ENCODE measurements at regions of chr6 and their contacts with region 1.

Region 1: DNA sequence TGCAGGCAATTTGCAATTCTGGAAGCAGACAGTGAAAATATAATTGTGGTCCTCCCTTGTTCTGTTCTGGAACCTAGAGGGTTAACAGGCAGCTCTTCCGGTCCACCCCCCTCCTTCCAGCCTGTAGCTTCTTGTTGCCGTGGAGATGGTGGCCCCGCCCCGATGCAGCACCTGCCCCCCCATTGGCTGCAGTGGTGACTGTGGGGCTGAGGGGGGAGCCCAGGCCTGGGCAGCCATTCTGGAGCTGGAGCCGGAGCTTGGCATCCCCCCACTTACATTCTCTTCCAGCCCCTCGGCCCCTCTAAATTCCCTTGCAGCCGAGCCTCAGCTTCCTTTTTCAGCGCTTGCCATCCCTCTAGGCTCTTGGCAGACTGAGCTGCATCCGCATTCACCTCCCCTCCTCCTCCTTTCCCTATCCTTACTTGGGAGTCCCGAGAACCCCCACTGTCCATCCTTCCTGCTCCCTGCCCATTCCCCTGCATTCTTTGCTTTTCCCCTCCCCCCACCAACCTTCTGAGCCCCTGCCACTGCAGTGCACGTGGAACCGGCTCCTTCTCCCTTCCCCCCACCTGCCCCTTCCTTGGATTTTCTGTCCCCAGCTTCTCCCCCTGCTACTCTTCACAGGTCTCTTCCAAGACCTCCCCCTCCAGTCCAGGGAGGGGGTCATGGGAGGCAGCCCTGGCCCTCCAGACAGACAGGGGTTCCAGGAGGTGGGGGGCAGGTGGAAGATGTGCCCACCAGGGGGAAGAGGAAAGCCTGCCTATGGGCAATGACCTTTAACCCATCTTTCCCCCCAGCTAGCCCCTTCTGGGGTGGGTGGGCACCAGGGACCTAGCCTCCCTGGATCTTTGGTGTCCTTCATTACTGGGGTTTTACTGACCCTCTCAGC is 11.4 kb downstream of the SYNGAP1 start:
- DNase-seq: peak; percentile 63 to 90 (median 86)
- ATAC-seq: peak; percentile 62 to 73 (median 64)
- H3K4me3 ChIP-seq: peak overlapping the region; percentile 50 to 67
- H3K4me3 Mint-ChIP-seq: peak overlapping the region; percentile 85 to 97 (median 87)
- H3K27ac ChIP-seq: peak overlapping the region; percentile 88
- H3K27ac Mint-ChIP-seq: peak overlapping the region; percentile 90 to 95
- H3K4me1 ChIP-seq: peaks cover 42 to 67% of the 10 kb centered on the region in 2 experiments
- H3K4me1 Mint-ChIP-seq: peaks cover 62 to 71% (median 70%) of the 10 kb centered on the region in 3 donors
- H3K27me3 ChIP-seq: no peaks in the 10 kb centered on the region
- H3K27me3 Mint-ChIP-seq: no peaks in the 10 kb centered on the region

Region 2: GRCh38 chr6:33417903-33418689 is 13.1 kb before region 1 on chr6 and contains the start of gene CUTA:
- CTCF ChIA-PET with region 1: interaction called in 1 of 2 experiments, 12 read pairs
- POLR2A ChIA-PET with region 1: interaction called in 1 of 2 experiments, 5 read pairs
- DNase-seq: peak; percentile 95 to 100 (median 99)
- ATAC-seq: peak; percentile 86 to 92 (median 92)
- H3K4me3 ChIP-seq: peak within 1 kb of the TSS; percentile 86 to 91
- H3K4me3 Mint-ChIP-seq: peak within 1 kb of the TSS; percentile 92 to 94 (median 94)
- H3K27ac ChIP-seq: peak within 1 kb of the TSS; percentile 98
- H3K27ac Mint-ChIP-seq: peak within 1 kb of the TSS; percentile 96 to 99
- H3K4me1 ChIP-seq: peaks cover 23 to 72% of the 10 kb centered on the region in 2 experiments
- H3K4me1 Mint-ChIP-seq: peaks cover 65 to 84% (median 79%) of the 10 kb centered on the region in 3 donors
- H3K27me3 ChIP-seq: no peaks in the 10 kb centered on the region
- H3K27me3 Mint-ChIP-seq: no peaks in the 10 kb centered on the region
- total RNA-seq, gene CUTA: 169 to 184 (median 176) TPM

Region 3: DNA sequence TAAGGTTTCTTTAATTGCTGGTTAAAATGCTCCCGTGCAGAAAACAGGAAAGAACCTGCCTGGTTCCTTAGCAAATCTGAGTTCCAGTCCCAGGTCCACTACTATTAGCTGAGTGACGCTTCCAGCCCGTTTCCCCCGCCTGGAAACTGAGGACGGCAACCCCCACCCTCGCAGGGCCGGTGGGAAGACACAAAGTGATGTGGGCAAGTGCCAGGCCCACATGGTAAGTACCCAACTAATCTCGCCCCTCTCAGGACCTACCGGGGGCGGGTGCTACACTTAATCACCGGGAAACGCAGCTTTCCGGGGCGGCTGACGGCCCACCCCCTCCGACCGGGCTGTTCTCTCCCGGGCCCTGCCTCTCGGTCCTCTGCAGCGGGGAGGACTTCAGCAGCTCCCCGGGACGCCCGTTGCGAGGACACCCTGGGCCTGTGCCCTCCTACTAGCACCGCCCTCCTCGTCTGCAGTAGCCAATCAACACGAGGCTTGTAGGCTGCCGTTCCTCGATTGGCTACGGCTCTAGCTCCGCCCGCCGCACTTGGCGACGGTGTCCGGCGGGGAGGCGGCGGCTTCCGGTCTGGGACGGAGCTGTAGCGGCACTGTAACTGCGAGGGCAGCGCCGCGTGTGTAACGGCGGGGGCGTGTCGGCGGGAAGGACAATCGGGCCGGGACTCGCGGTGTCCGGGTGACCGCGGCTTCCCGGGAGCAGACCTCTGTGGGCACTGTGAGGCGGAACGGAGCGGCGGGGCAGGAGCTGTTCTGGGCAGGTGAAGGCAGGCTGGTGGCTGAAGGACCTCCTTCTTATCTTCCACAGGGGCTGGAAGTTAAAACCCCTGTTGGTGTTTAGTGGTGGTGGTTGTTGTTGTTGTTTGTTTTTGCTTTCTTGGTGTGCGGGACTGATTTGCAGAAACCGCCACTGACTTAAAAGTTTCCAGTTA is 23.0 kb after region 1 on chr6 and contains the start of gene ZBTB9:
- CTCF ChIA-PET with region 1: interaction called in 1 of 2 experiments, 18 read pairs
- POLR2A ChIA-PET with region 1: interaction called in 1 of 2 experiments, 6 read pairs
- DNase-seq: peak; percentile 82 to 95 (median 90)
- ATAC-seq: peak; percentile 99 to 100 (median 99)
- H3K4me3 ChIP-seq: peak within 1 kb of the TSS; percentile 92
- H3K4me3 Mint-ChIP-seq: peak within 1 kb of the TSS; percentile 88 to 96 (median 91)
- H3K27ac ChIP-seq: peak within 1 kb of the TSS; percentile 69
- H3K27ac Mint-ChIP-seq: peak within 1 kb of the TSS; percentile 84 to 97
- H3K4me1 ChIP-seq: peaks cover 10 to 37% of the 10 kb centered on the region in 2 experiments
- H3K4me1 Mint-ChIP-seq: peaks cover 35 to 42% (median 39%) of the 10 kb centered on the region in 3 donors
- H3K27me3 ChIP-seq: no peaks in the 10 kb centered on the region
- H3K27me3 Mint-ChIP-seq: no peaks in the 10 kb centered on the region
- total RNA-seq, gene ZBTB9: 3.9 to 12.6 (median 11.1) TPM

Region 4: DNA sequence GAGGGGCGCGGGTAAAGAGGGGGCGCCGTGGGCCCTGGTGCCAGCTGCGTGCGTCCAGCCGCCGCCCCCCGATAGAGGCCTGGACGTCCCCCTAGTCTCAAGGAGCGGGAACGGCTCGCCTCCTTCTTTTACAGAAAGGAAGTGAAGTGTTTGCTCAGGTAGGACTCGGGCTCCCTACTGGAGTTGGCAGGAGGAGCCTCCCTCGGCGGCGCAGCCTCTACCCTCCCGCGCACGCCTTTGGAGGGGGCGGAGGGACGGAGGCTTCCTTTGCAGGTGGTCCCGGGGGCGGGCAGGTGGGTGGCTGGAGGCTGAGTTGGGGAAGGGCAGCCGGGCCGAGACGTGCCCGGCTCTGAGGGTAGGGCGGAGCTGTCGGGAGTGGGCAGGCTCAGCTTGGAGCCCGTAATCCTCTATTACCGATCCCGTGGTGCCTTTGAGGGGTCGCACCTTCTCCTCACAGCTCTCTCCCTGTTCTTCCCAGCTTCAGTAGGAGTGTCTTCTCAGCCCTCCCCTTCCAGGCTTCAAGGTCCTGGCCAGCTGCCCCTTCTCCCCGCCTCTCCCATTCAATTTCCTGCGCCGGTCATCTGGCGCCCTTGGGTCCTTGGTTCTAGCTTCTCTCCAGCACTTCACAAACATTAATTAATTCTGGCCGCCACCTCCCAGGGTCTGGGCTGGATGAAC is 190.6 kb after region 1 on chr6:
- CTCF ChIA-PET with region 1: no interaction called
- POLR2A ChIA-PET with region 1: no interaction called
- DNase-seq: peak in 12 of 35 experiments; percentile 9 to 55 (median 34)
- ATAC-seq: peak; percentile 25 to 45 (median 40)
- H3K4me3 ChIP-seq: peak overlapping the region; percentile 86 to 98
- H3K4me3 Mint-ChIP-seq: peak overlapping the region; percentile 85 to 95 (median 88)
- H3K27ac ChIP-seq: peak overlapping the region; percentile 83
- H3K27ac Mint-ChIP-seq: peak overlapping the region; percentile 81 to 85
- H3K4me1 ChIP-seq: peaks cover 20 to 56% of the 10 kb centered on the region in 2 experiments
- H3K4me1 Mint-ChIP-seq: peaks cover 59 to 73% (median 62%) of the 10 kb centered on the region in 3 donors
- H3K27me3 ChIP-seq: no peaks in the 10 kb centered on the region
- H3K27me3 Mint-ChIP-seq: no peaks in the 10 kb centered on the region